Activated CD4-positive, alpha-beta T cell treated with anti-CD3 and anti-CD28 coated beads for 36 hours (primary cell): ENCODE measurements at regions of chr17 and their contacts with region 1.

Region 1: GRCh38 chr17:21511363-21512198 is 135.4 kb downstream of the KCNJ12 start:
- DNase-seq: peak; percentile 82
- ATAC-seq: peak; percentile 87
- H3K4me3 Mint-ChIP-seq: peak overlapping the region; percentile 60
- H3K27ac Mint-ChIP-seq: no peak overlapping the region
- H3K4me1 Mint-ChIP-seq: peaks cover 14% of the 10 kb centered on the region
- H3K27me3 Mint-ChIP-seq: peaks cover 31% of the 10 kb centered on the region

Region 2: DNA sequence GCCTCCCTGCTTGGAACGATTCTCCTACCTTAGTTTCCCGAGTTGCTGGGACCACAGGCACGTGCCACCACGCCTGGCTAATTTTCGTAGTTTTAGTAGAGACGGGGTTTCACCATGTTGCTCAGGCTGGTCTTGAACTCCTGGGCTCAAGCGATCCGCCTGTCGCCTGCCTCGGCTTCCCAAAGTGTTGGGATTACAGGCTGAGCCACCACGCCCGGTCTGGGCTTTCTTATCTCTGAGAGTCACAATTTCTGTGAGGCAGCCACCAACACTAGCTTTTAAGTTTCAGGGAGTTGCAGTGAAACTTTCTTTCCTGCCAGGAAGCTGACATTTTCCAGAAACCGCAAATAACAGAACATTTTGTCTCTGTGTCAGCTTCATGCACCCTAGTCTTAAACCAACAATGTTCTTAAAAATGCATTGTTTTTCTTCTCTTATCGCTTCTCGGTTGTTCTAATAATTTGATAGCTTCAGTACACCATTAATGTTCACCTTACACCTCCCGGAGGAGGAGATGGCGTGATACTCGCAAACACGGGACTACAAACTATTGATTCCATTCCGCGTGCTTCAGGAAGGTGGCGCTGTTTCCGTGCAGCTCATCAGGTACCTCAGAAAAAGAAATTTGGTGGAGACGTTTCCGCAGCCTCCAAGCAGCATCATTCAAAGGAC is 392.2 kb before region 1 on chr17:
- CTCF ChIA-PET with region 1: interaction called, 4 read pairs
- POLR2A ChIA-PET with region 1: no interaction called
- intact Hi-C with region 1: loop called (anchors 1 kb)
- DNase-seq: peak; percentile 83
- ATAC-seq: peak; percentile 95
- H3K4me3 Mint-ChIP-seq: peak overlapping the region; percentile 2
- H3K27ac Mint-ChIP-seq: peak overlapping the region; percentile 12
- H3K4me1 Mint-ChIP-seq: peaks cover 7% of the 10 kb centered on the region
- H3K27me3 Mint-ChIP-seq: peaks cover 2% of the 10 kb centered on the region